Adrenal gland (tissue), 19 donors: ENCODE measurements at regions of chr1 and their contacts with region 1.

Region 1: GRCh38 chr1:32521165-32521564 is 18.1 kb upstream of the ZBTB8A start:
- DNase-seq: no peak
- H3K4me3 ChIP-seq: no peak overlapping the region
- H3K27ac ChIP-seq: no peak overlapping the region
- H3K4me1 ChIP-seq: no peaks in the 10 kb centered on the region
- H3K27me3 ChIP-seq: no peaks in the 10 kb centered on the region
- CTCF ChIP-seq: no peak
- POLR2A ChIP-seq: no peak

Region 2: DNA sequence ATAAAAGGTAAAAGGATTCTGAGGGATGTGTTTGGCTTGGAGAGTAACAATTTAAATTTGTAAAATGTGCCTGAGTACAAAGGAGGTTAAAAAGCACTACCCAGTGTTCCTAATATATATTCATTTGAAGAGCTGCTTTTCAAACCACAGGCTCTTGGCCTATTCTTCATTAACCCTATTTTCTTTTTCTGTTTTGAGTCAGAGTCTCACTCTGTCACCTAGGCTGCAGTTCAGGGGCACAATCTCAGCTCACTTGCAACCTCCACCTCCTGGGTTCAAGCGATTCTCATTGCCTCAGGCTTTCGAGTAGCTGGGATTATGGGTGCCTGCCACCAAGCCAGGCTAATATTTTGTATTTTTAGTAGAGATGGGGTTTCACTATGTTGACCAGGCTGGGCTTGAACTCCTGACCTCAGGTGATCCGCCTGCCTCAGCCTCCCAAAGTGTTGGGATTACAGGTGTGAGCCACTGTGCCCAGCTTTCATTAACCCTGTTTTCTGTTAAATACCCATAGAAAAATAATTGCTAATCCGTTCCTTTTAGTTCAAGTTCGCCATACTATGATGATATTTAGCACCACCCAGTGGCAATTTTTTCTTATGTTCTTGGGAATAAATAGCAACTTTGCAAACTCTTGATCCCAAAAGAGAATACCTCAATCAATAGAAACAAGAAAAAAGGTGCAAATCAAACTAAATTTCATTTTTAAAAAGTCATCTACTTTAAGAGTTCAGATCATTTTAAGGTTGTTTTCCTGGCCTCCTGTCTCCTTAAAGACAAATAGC is 98.7 kb after region 1 on chr1:
- intact Hi-C with region 1: loop called in 1 of 2 experiments (anchors 10 kb)
- DNase-seq: no peak
- H3K4me3 ChIP-seq: no peak overlapping the region
- H3K27ac ChIP-seq: no peak overlapping the region
- H3K4me1 ChIP-seq: no peaks in the 10 kb centered on the region
- H3K27me3 ChIP-seq: no peaks in the 10 kb centered on the region
- CTCF ChIP-seq: peak in 3 of 6 experiments; percentile 30 to 36 (median 34)
- POLR2A ChIP-seq: no peak

Region 3: GRCh38 chr1:32636914-32637645 is 115.9 kb after region 1 on chr1:
- intact Hi-C with region 1: no loop called
- DNase-seq: no peak
- H3K4me3 ChIP-seq: no peak overlapping the region
- H3K27ac ChIP-seq: no peak overlapping the region
- H3K4me1 ChIP-seq: no peaks in the 10 kb centered on the region
- H3K27me3 ChIP-seq: no peaks in the 10 kb centered on the region
- CTCF ChIP-seq: no peak
- POLR2A ChIP-seq: no peak

Region 4: DNA sequence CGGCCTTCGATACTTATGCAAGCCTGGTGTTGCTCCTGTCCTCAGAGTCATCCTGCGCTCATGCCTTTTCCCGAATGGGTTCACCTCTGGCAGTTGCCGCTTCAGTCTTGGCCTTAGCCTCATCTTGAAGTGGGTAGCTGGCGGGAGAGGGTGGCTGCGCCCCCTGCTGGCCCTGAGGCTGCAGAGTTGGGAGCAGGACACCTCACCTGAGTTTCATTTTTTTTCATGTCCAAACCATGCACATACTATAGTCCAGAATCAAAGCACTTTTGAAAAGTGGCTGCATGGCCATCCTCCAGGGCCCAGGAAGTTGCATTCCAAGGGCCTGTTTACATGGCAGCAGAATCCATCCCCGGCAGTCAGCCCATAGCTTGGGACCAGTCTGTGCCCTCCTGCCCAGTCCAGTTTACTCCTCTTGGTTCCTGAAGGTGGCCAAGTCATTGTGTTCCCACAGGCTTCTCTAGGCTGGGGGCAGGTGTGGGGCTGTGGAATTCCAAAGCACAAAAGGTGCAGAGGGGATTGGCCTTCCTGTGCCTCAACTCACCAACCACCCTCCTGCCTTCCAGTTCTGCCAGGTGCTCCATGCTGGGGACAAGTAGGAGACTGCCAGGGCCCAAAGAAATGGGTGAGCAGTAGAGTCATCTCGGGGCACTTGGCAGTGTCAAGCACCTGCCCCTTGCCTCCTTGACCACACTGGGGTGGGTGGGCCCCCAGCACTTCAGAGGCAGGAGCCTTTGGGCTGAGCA is 252.0 kb after region 1 on chr1:
- intact Hi-C with region 1: no loop called
- DNase-seq: peak; percentile 84 to 95 (median 92)
- H3K4me3 ChIP-seq: no peak overlapping the region
- H3K27ac ChIP-seq: peak overlapping the region in 4 of 5 donors; percentile 26 to 84 (median 70)
- H3K4me1 ChIP-seq: peaks cover 29 to 53% of the 10 kb centered on the region in 2 donors
- H3K27me3 ChIP-seq: no peaks in the 10 kb centered on the region
- CTCF ChIP-seq: peak; percentile 93 to 96 (median 94)
- POLR2A ChIP-seq: peak in 1 of 2 donors; percentile 40

Region 5: DNA sequence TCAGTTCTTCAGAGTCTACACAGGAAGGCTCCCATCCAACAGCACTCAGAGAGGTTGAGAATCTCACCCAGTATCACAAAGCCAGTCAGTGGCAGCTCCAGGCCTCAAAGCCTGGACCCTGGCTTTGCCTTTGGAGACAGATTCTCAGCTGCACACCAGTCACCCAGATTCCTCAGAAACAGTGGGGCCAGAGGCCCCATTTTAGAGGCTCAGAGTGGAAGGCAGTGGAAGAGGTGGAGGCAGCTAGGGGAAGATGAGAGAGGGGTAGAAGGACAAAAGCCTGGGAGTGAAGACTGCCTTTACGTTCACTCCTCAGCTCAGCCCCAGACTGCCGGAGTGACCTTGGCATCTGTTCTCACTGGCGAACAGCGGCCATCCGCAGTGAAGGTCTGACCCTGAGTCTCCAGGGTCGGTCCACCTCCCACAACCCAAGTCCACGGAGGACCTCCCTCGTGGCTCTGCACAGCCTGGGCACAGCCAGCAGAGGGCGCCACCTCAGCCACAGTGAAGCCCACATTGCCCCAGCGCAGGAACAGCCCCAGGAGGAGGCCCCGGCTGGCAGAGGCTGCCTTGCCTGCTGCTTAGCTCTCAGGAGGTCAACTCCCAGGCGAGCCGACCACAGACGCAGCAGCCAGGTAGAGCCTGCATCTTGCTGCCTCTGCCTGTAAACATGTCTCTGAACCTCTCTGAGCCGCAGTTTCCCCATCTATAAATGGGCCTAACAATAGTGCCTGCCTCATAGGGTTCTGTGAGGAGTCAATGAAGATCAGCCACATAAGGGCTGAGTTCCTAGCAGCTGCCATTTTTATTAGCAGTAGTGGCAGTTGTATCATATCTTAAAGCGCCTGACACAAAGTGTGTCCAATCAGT is 355.4 kb after region 1 on chr1:
- intact Hi-C with region 1: loop called in 1 of 2 experiments (anchors 10 kb)
- DNase-seq: peak; percentile 51 to 85 (median 72)
- H3K4me3 ChIP-seq: no peak overlapping the region
- H3K27ac ChIP-seq: no peak overlapping the region
- H3K4me1 ChIP-seq: peaks cover 0 to 9% of the 10 kb centered on the region in 2 donors
- H3K27me3 ChIP-seq: no peaks in the 10 kb centered on the region
- CTCF ChIP-seq: peak; percentile 77 to 91 (median 85)
- POLR2A ChIP-seq: no peak